Posterior vena cava (tissue), 2 donors: ENCODE measurements at regions of chr9 and their contacts with region 1.

Region 1: GRCh38 chr9:17477816-17478215 is 101.0 kb upstream of the SH3GL2 start:
- DNase-seq: no peak

Region 2: GRCh38 chr9:17519761-17520160 is 41.9 kb after region 1 on chr9:
- intact Hi-C with region 1: loop called in 1 of 2 experiments (anchors 1 kb)
- DNase-seq: no peak